ENCODE measurements at regions of chr11 and their contacts with region 1.

Region 1: GRCh38 chr11:30346068-30346688 is 23.3 kb downstream of the ARL14EP start:
- DNase-seq: no peak
- ATAC-seq: no peak
- H3K4me3 ChIP-seq: no peak overlapping the region
- H3K27ac ChIP-seq: no peak overlapping the region
- H3K4me1 ChIP-seq: peaks cover 18% of the 10 kb centered on the region
- H3K27me3 ChIP-seq: no peaks in the 10 kb centered on the region
- CTCF ChIP-seq: peak; percentile 45 to 52 (median 49); a peak in 5 of 6 replicates
- EP300 ChIP-seq: no peak
- POLR2A ChIP-seq: no peak
- RAD21 ChIP-seq: peak; percentile 80

Region 2: GRCh38 chr11:30314625-30315024 is 31.6 kb before region 1 on chr11:
- CTCF ChIA-PET with region 1: interaction called, 20 read pairs
- POLR2A ChIA-PET with region 1: interaction called, 6 read pairs
- RAD21 ChIA-PET with region 1: interaction called, 16 read pairs
- SMC1A ChIA-PET with region 1: interaction called, 20 read pairs
- in situ Hi-C with region 1: no loop called
- intact Hi-C with region 1: no loop called
- DNase-seq: no peak
- ATAC-seq: no peak
- H3K4me3 ChIP-seq: no peak overlapping the region
- H3K27ac ChIP-seq: no peak overlapping the region
- H3K4me1 ChIP-seq: peaks cover 17% of the 10 kb centered on the region
- H3K27me3 ChIP-seq: no peaks in the 10 kb centered on the region
- CTCF ChIP-seq: peak; percentile 39 to 55 (median 47); a peak in 5 of 6 replicates
- EP300 ChIP-seq: no peak
- POLR2A ChIP-seq: no peak
- RAD21 ChIP-seq: peak; percentile 58

Region 3: GRCh38 chr11:30333405-30333804 is 12.8 kb before region 1 on chr11:
- CTCF ChIA-PET with region 1: interaction called, 16 read pairs
- POLR2A ChIA-PET with region 1: interaction called, 42 read pairs
- RAD21 ChIA-PET with region 1: interaction called, 4 read pairs
- SMC1A ChIA-PET with region 1: interaction called, 51 read pairs
- in situ Hi-C with region 1: no loop called
- intact Hi-C with region 1: no loop called
- DNase-seq: no peak
- ATAC-seq: peak; percentile 82
- H3K4me3 ChIP-seq: no peak overlapping the region
- H3K27ac ChIP-seq: no peak overlapping the region
- H3K4me1 ChIP-seq: no peaks in the 10 kb centered on the region
- H3K27me3 ChIP-seq: no peaks in the 10 kb centered on the region
- CTCF ChIP-seq: peak; percentile 48 to 55 (median 49); a peak in 5 of 6 replicates
- EP300 ChIP-seq: no peak
- POLR2A ChIP-seq: no peak
- RAD21 ChIP-seq: peak; percentile 56

Region 4: GRCh38 chr11:30855383-30856006 is 509.3 kb after region 1 on chr11:
- CTCF ChIA-PET with region 1: interaction called, 4 read pairs
- POLR2A ChIA-PET with region 1: no interaction called
- RAD21 ChIA-PET with region 1: no interaction called
- SMC1A ChIA-PET with region 1: interaction called, 3 read pairs
- in situ Hi-C with region 1: no loop called
- intact Hi-C with region 1: loop called (anchors 1 kb)
- DNase-seq: no peak
- ATAC-seq: no peak
- H3K4me3 ChIP-seq: no peak overlapping the region
- H3K27ac ChIP-seq: no peak overlapping the region
- H3K4me1 ChIP-seq: no peaks in the 10 kb centered on the region
- H3K27me3 ChIP-seq: no peaks in the 10 kb centered on the region; a peak in 1 of 4 replicates
- CTCF ChIP-seq: no peak; a peak in 1 of 6 replicates
- EP300 ChIP-seq: no peak
- POLR2A ChIP-seq: no peak
- RAD21 ChIP-seq: no peak

Region 5: DNA sequence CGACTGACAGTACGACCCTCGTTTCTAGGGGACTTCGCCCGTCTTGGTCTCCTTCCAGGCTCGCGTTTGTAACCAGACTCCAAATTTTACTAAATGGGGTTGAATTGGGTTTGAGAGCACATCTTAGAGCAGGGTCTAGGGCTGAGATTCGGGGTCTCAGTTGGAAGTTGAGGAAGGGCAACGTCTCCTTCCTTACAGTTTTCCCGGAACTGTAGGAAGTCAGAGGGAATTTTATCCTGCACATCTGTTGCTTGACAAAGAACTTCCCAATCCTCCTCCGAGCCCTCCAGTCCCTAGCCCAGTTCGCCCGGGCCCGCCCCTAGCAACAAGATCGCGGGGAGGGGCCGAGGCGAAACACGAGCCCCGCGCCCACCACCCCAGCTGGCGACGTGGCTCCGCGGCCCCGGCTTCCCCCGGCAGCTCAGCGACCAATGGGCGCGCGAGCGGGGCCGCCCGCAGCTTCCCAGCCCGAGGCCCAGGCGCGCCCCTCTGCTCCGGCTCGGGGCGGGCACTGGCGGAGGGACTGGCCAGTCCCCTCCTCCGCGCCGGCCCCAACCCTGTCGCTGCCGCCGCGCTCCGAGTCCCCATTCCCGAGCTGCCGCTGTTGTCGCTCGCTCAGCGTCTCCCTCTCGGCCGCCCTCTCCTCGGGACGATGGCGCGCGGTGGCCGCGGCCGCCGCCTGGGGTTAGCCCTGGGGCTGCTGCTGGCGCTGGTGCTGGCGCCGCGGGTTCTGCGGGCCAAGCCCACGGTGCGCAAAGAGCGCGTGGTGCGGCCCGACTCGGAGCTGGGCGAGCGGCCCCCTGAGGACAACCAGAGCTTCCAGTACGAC is 1744.6 kb after region 1 on chr11 and contains the start of gene RCN1:
- CTCF ChIA-PET with region 1: no interaction called
- POLR2A ChIA-PET with region 1: no interaction called
- RAD21 ChIA-PET with region 1: no interaction called
- SMC1A ChIA-PET with region 1: no interaction called
- in situ Hi-C with region 1: loop called (anchors 25 kb)
- intact Hi-C with region 1: no loop called
- DNase-seq: no peak
- ATAC-seq: peak; percentile 80
- H3K4me3 ChIP-seq: peak within 1 kb of the TSS; percentile 94
- H3K27ac ChIP-seq: peak within 1 kb of the TSS; percentile 95
- H3K4me1 ChIP-seq: peaks cover 13% of the 10 kb centered on the region
- H3K27me3 ChIP-seq: no peaks in the 10 kb centered on the region
- CTCF ChIP-seq: no peak
- EP300 ChIP-seq: no peak
- POLR2A ChIP-seq: peak; percentile 78
- RAD21 ChIP-seq: no peak
- polyA plus RNA-seq, gene RCN1: 17.6 to 37.4 TPM

Measured in GM12878 (cell line).